Activated T-helper 1 cell treated with anti-CD3 and anti-CD28 coated beads, Interleukin-12 subunit alpha, Interleukin-12 subunit beta, Interleukin-2, Interleukin-4 antibody, amounts not matched to agents 30 ng/mL and 10 ng/mL and 1 ng/mL, durations not matched to agents 14 hours and 24 hours and 36 hours (primary cell): ENCODE measurements at regions of chr7 and their contacts with region 1.

Region 1: GRCh38 chr7:17144322-17144721 is 154.1 kb upstream of the AHR start:
- DNase-seq: peak; percentile 49
- H3K4me3 Mint-ChIP-seq: peak overlapping the region; percentile 1
- H3K27ac Mint-ChIP-seq: peak overlapping the region; percentile 25
- H3K4me1 Mint-ChIP-seq: peaks cover 46% of the 10 kb centered on the region
- H3K27me3 Mint-ChIP-seq: no peaks in the 10 kb centered on the region

Region 2: GRCh38 chr7:16926283-16926682 is 218.0 kb before region 1 on chr7:
- intact Hi-C with region 1: loop called (anchors 1 kb)
- DNase-seq: no peak
- H3K4me3 Mint-ChIP-seq: no peak overlapping the region
- H3K27ac Mint-ChIP-seq: no peak overlapping the region
- H3K4me1 Mint-ChIP-seq: peaks cover 49% of the 10 kb centered on the region
- H3K27me3 Mint-ChIP-seq: no peaks in the 10 kb centered on the region

Region 3: DNA sequence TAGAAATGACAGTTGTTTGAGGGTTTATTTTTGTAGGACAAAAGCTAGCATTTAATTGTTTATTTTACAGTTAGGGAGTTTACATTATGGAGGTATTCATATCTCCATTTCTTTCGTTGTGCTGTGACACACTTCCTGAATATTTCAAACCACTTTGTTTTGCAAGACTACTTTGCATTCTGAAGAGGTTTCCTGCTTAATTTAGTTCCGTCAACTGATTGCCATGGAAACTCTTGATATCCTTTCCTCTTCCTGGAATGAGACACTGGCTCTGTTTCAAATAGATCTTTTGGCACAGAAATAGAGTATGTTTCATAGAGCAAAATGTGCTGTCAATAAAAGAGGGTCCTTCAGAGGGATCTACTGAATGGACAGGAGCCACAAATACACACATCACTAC is 103.0 kb before region 1 on chr7:
- intact Hi-C with region 1: loop called (anchors 5 kb)
- DNase-seq: no peak
- H3K4me3 Mint-ChIP-seq: no peak overlapping the region
- H3K27ac Mint-ChIP-seq: no peak overlapping the region
- H3K4me1 Mint-ChIP-seq: peaks cover 20% of the 10 kb centered on the region
- H3K27me3 Mint-ChIP-seq: peaks cover 6% of the 10 kb centered on the region

Region 4: GRCh38 chr7:17063045-17063383 is 81.3 kb before region 1 on chr7:
- intact Hi-C with region 1: loop called (anchors 5 kb)
- DNase-seq: no peak
- H3K4me3 Mint-ChIP-seq: no peak overlapping the region
- H3K27ac Mint-ChIP-seq: no peak overlapping the region
- H3K4me1 Mint-ChIP-seq: peaks cover 17% of the 10 kb centered on the region
- H3K27me3 Mint-ChIP-seq: no peaks in the 10 kb centered on the region

Region 5: GRCh38 chr7:17130281-17131059 is 13.9 kb before region 1 on chr7:
- intact Hi-C with region 1: loop called (anchors 1 kb)
- DNase-seq: no peak
- H3K4me3 Mint-ChIP-seq: no peak overlapping the region
- H3K27ac Mint-ChIP-seq: no peak overlapping the region
- H3K4me1 Mint-ChIP-seq: peaks cover 44% of the 10 kb centered on the region
- H3K27me3 Mint-ChIP-seq: no peaks in the 10 kb centered on the region